IMR-90 (cell line): ENCODE measurements at regions of chr12 and their contacts with region 1.

Region 1: DNA sequence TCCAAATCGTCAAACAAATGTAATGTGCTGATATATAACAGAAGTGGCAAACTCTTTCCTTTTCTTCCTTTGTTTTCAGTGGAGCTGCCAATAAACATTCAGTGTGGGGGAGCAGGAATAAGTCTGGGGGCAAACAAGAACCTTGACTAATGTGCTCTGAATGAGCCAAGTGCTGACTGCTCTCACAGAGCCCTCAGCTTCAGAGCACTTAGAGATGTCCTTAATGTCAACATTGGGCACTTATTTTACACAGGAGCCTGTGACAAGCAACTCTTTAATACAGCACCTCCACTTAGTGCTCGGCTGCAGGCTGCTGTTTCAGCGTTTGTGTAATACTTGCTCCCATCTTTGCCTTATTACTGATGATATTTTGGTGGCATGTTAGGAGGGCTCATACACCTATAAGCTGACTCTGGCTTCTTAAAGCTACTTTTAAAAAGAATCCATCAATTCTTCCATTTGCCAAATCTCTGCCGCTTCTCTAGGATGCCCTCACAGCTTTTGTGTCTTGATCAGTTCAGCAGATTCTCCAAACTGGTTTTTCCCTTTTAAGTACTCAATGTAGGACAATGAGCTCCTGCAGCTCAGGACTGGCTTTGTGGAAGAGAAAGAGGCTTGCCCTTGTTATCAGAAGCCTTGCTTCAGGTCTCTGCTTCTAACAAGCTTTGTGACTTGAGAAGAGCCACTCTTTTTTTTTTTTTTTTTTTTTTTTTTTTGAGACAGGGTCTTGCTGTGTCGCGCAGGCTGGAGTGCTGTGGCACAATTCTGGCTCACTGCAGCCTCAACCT is 206.6 kb downstream of the MON2 start:
- DNase-seq: no peak
- ATAC-seq: no peak
- H3K4me3 ChIP-seq: no peak overlapping the region
- H3K27ac ChIP-seq: no peak overlapping the region
- H3K4me1 ChIP-seq: no peaks in the 10 kb centered on the region
- H3K27me3 ChIP-seq: peaks cover 7% of the 10 kb centered on the region
- CTCF ChIP-seq: no peak
- POLR2A ChIP-seq: no peak
- RAD21 ChIP-seq: no peak

Region 2: DNA sequence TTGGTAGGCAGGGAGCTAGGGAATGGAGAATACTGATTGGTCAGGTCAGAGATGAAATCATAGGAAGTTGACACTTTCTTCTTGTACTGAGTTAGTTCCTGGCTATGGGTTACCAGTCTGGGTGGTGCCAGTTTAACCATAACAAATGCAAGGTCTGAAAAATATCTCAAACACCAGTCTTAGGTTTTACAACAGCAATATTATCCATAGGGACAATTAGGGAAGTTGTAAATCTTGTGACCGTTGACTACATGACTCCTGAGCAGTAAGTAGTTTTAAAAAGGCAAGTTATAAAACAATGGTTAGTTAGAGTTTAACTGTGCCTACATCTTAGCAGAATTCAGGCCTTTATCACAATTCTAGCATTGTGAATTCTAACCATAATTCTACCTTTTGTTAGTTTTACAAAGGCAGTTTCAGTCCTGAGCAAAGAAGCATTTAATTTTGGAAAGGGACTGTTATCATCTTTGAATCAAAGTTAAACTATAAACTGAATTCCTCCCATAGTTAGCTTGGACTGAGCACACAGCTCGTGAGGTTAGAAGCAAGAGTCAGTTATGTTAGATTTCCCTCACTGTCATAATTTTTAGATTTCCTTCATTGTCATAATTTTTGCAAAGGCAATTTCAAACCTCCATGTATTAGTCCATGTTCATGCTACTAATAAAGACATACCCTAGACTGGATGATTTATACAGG is 226.3 kb before region 1 on chr12:
- CTCF ChIA-PET with region 1: no interaction called
- POLR2A ChIA-PET with region 1: no interaction called
- dilution Hi-C with region 1: no loop called
- in situ Hi-C with region 1: no loop called
- intact Hi-C with region 1: no loop called
- DNase-seq: no peak
- ATAC-seq: no peak
- H3K4me3 ChIP-seq: no peak overlapping the region
- H3K27ac ChIP-seq: no peak overlapping the region
- H3K4me1 ChIP-seq: no peaks in the 10 kb centered on the region
- H3K27me3 ChIP-seq: peaks cover 7% of the 10 kb centered on the region
- CTCF ChIP-seq: no peak
- POLR2A ChIP-seq: no peak
- RAD21 ChIP-seq: no peak

Region 3: DNA sequence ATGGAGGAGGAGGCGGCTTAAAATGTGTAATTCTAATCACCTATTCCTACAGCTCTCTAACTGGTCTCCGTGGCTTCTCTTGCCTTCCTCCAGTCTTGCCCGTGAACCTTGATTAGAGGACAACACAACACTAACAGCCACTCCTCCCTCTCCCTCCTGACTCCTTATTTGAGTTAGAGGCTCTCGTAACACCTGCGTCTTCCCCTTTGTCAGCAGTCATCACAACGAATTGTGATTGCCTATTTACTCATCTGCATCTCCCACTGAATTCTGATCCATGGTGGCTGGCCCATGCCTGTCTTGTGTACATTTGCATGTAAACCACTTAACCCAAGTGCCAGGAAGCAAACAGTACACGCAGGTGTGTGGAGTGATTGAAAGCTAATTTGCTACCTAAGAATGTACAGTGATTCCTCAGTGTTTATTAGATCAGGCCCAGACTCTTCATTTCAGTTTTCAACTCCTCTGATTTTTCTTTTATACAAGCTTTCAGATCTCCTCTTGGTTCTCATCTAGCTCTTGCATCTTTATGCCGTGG is 52.1 kb before region 1 on chr12:
- CTCF ChIA-PET with region 1: no interaction called
- POLR2A ChIA-PET with region 1: no interaction called
- dilution Hi-C with region 1: no loop called
- in situ Hi-C with region 1: no loop called
- intact Hi-C with region 1: no loop called
- DNase-seq: no peak
- ATAC-seq: no peak
- H3K4me3 ChIP-seq: no peak overlapping the region
- H3K27ac ChIP-seq: no peak overlapping the region
- H3K4me1 ChIP-seq: no peaks in the 10 kb centered on the region
- H3K27me3 ChIP-seq: no peaks in the 10 kb centered on the region
- CTCF ChIP-seq: no peak
- POLR2A ChIP-seq: no peak
- RAD21 ChIP-seq: no peak

Region 4: DNA sequence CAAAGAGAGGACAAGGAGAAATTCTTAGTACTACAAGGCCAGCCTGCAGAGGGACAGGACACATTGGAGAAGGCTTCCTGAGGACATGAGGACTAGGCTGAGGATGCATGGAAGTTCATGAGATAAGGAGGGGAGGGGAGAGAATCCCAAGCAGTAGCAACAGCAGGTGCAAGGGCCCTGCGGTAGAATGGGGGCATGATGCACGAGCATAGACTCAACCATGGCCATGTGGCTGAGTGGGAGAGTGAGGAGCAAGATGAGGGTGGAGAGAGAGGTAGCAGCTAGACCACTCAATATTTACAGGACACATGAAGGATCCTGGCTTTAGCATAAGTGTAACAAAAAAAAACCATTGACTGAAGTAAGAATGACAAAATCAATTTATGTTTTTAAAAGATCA is 133.7 kb after region 1 on chr12:
- CTCF ChIA-PET with region 1: no interaction called
- POLR2A ChIA-PET with region 1: interaction called, 14 read pairs
- dilution Hi-C with region 1: no loop called
- in situ Hi-C with region 1: no loop called
- intact Hi-C with region 1: no loop called
- DNase-seq: no peak
- ATAC-seq: no peak
- H3K4me3 ChIP-seq: no peak overlapping the region
- H3K27ac ChIP-seq: no peak overlapping the region
- H3K4me1 ChIP-seq: no peaks in the 10 kb centered on the region
- H3K27me3 ChIP-seq: peaks cover 17% of the 10 kb centered on the region
- CTCF ChIP-seq: no peak
- POLR2A ChIP-seq: no peak
- RAD21 ChIP-seq: no peak